CD4-positive, alpha-beta memory T cell (primary cell): ENCODE measurements at regions of chr17 and their contacts with region 1.

Region 1: GRCh38 chr17:5592382-5592781 is 8.1 kb upstream of the NLRP1 start:
- DNase-seq: peak in 4 of 5 donors; percentile 38 to 47 (median 42)
- H3K4me3 ChIP-seq: no peak overlapping the region
- H3K4me3 Mint-ChIP-seq: no peak overlapping the region
- H3K27ac ChIP-seq: no peak overlapping the region
- H3K27ac Mint-ChIP-seq: no peak overlapping the region
- H3K4me1 ChIP-seq: peaks cover 1% of the 10 kb centered on the region
- H3K4me1 Mint-ChIP-seq: peaks cover under 1 to 8% (median 2%) of the 10 kb centered on the region in 4 donors
- H3K27me3 ChIP-seq: no peaks in the 10 kb centered on the region
- H3K27me3 Mint-ChIP-seq: peaks cover 14 to 21% of the 10 kb centered on the region in 2 donors

Region 2: DNA sequence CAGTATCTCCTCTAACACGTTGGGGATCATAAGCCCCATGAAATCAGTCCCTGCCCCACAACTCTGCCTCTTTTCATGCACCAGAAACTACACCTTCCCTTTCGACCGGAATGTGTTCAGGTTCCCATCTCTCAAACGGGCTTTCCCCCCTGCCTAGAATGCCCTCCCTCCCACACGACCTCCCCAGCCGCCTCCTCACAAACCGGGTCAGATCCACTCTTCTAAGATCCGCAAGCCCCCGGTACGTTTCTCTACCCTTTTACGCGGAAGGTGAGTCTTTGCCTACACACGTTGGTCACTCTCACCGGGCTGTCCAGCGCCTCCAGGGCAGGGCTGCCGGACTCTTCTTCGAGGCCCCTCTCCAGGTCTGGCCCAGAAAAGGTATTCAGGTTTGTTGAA is 124.3 kb before region 1 on chr17:
- CTCF ChIA-PET with region 1: no interaction called
- POLR2A ChIA-PET with region 1: no interaction called
- intact Hi-C with region 1: no loop called
- DNase-seq: peak in 2 of 5 donors; percentile 7 to 20
- H3K4me3 ChIP-seq: peak overlapping the region; percentile 33 to 68
- H3K4me3 Mint-ChIP-seq: peak overlapping the region; percentile 80 to 95 (median 88)
- H3K27ac ChIP-seq: peak overlapping the region; percentile 60
- H3K27ac Mint-ChIP-seq: peak overlapping the region; percentile 33 to 94 (median 83)
- H3K4me1 ChIP-seq: peaks cover 18% of the 10 kb centered on the region
- H3K4me1 Mint-ChIP-seq: peaks cover 32 to 50% (median 43%) of the 10 kb centered on the region in 4 donors
- H3K27me3 ChIP-seq: no peaks in the 10 kb centered on the region
- H3K27me3 Mint-ChIP-seq: no peaks in the 10 kb centered on the region

Region 3: DNA sequence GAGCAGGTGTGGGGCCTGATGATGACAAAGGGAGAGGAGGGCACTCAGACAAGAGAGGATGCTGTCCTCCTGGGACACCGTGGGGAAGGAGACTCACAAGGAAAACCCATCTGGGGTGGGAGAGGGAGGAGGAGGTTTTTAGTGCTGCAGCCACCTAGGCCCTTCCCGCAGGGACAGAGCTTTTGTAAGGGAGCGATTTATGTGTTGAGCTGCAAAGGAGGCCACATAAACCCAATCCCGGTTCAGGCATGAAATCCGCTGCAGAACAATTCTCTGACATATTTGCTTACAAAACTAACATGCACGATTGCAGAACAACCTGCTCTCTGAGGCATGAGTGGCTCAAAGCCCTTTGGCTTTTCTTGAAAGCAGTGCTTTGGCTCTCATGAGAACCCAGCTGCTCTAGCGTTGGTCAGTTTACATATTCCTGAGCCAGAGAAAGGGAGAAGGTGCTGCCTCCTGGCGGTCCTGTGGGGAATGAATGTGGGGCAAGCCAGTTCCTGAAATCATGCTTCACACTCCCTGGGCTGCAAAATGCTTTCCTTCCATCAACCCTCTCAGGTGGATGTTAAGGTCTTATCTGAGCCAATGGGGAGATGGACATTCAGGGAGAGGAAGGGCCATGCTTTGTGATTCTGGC is 114.3 kb after region 1 on chr17:
- CTCF ChIA-PET with region 1: interaction called, 36 read pairs
- POLR2A ChIA-PET with region 1: no interaction called
- intact Hi-C with region 1: loop called (anchors 1 kb)
- DNase-seq: peak in 4 of 5 donors; percentile 29 to 45 (median 40)
- H3K4me3 ChIP-seq: no peak overlapping the region
- H3K4me3 Mint-ChIP-seq: no peak overlapping the region
- H3K27ac ChIP-seq: no peak overlapping the region
- H3K27ac Mint-ChIP-seq: no peak overlapping the region
- H3K4me1 ChIP-seq: no peaks in the 10 kb centered on the region
- H3K4me1 Mint-ChIP-seq: no peaks in the 10 kb centered on the region
- H3K27me3 ChIP-seq: no peaks in the 10 kb centered on the region
- H3K27me3 Mint-ChIP-seq: peaks cover 14 to 28% of the 10 kb centered on the region in 2 donors

Region 4: GRCh38 chr17:6421700-6422604 is 829.6 kb after region 1 on chr17:
- CTCF ChIA-PET with region 1: interaction called, 28 read pairs
- POLR2A ChIA-PET with region 1: interaction called, 11 read pairs
- intact Hi-C with region 1: loop called (anchors 1 kb)
- DNase-seq: peak; percentile 53 to 62 (median 57)
- H3K4me3 ChIP-seq: no peak overlapping the region
- H3K4me3 Mint-ChIP-seq: no peak overlapping the region
- H3K27ac ChIP-seq: no peak overlapping the region
- H3K27ac Mint-ChIP-seq: peak overlapping the region in 1 of 7 donors; percentile 42
- H3K4me1 ChIP-seq: peaks cover 7% of the 10 kb centered on the region
- H3K4me1 Mint-ChIP-seq: peaks cover 2 to 11% (median 7%) of the 10 kb centered on the region in 4 donors
- H3K27me3 ChIP-seq: peaks cover 4% of the 10 kb centered on the region
- H3K27me3 Mint-ChIP-seq: peaks cover 2 to 14% of the 10 kb centered on the region in 2 donors

Region 5: GRCh38 chr17:6427279-6427781 is 834.9 kb after region 1 on chr17:
- CTCF ChIA-PET with region 1: interaction called, 28 read pairs
- POLR2A ChIA-PET with region 1: interaction called, 11 read pairs
- intact Hi-C with region 1: loop called (anchors 1 kb)
- DNase-seq: peak; percentile 55 to 74 (median 64)
- H3K4me3 ChIP-seq: no peak overlapping the region
- H3K4me3 Mint-ChIP-seq: peak overlapping the region in 7 of 8 donors; percentile 40 to 79 (median 63)
- H3K27ac ChIP-seq: no peak overlapping the region
- H3K27ac Mint-ChIP-seq: peak overlapping the region; percentile 32 to 80 (median 54)
- H3K4me1 ChIP-seq: peaks cover 21% of the 10 kb centered on the region
- H3K4me1 Mint-ChIP-seq: peaks cover 10 to 22% (median 13%) of the 10 kb centered on the region in 4 donors
- H3K27me3 ChIP-seq: no peaks in the 10 kb centered on the region
- H3K27me3 Mint-ChIP-seq: peaks cover 0 to 5% of the 10 kb centered on the region in 2 donors

Region 6: DNA sequence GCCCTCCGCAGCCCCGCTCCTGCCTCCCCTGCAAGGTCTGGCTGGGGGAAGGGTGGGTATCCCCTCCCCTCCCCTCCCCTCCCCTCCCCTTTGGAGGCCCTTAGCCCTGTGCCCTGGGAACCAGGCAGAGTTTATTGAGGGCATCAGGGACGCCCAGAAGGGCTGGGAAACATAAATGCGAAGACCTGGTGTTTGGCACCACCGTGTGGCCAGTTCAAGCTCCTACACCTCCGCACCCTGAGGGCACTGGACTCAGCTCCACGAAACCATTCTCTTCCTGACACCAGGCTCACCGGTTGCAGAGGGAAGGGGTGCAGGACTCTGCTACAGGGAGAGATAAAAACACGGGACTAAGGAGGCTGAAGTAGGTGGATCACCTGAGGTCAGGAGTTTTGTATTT is 843.6 kb after region 1 on chr17:
- CTCF ChIA-PET with region 1: interaction called, 59 read pairs
- POLR2A ChIA-PET with region 1: no interaction called
- intact Hi-C with region 1: loop called (anchors 1 kb)
- DNase-seq: peak; percentile 52 to 67 (median 58)
- H3K4me3 ChIP-seq: no peak overlapping the region
- H3K4me3 Mint-ChIP-seq: no peak overlapping the region
- H3K27ac ChIP-seq: no peak overlapping the region
- H3K27ac Mint-ChIP-seq: no peak overlapping the region
- H3K4me1 ChIP-seq: no peaks in the 10 kb centered on the region
- H3K4me1 Mint-ChIP-seq: peaks cover 0 to 4% (median 0%) of the 10 kb centered on the region in 4 donors
- H3K27me3 ChIP-seq: peaks cover 4% of the 10 kb centered on the region
- H3K27me3 Mint-ChIP-seq: peaks cover 16 to 18% of the 10 kb centered on the region in 2 donors

Region 7: DNA sequence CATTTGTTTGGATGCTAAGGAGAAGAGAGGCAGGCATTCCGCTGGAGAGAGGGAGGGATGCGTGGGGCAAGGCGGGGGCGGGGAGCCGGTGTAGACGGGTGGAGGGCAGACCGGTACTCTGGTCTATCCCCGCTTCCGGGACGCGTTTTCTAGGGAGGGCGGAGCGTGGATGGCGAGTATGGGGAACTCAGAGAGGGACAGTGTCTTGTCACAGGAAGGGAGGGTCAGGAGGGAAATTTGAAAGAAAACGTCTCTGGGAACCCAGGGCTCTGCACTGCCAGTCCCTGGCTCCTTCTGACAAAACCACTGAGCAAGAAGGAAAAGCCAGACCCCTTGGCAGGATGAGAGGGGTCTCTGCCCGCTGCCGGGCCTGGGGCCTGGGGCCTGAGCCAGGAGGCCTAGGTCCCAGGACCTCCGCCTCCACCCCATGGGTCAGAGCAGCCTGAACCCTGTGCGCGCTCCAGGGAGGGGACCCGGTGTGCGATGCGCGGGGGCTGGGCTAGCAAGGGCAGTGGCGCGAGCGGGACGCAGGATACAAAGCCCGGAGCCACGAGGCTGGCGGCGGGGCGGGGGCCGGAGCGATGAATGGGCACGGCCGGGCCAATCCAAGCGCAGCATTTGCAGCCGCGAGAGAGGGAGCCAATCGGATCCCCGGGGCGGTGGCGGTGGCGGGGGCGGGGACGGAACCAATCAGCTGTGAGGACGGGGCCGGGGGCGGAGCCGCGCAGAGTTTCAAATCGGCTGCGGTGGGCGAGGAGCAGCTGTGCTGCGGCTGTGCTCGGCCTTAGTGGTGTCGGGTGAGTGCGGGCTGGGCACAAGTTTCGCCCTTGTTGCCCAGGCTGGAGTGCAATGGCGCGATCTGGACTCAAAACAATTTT is 851.5 kb after region 1 on chr17 and contains the start of gene PIMREG:
- CTCF ChIA-PET with region 1: interaction called, 10 read pairs
- POLR2A ChIA-PET with region 1: no interaction called
- intact Hi-C with region 1: no loop called
- DNase-seq: peak; percentile 82 to 91 (median 83)
- H3K4me3 ChIP-seq: peak within 1 kb of the TSS; percentile 69 to 93
- H3K4me3 Mint-ChIP-seq: peak within 1 kb of the TSS; percentile 91 to 94 (median 92)
- H3K27ac ChIP-seq: peak within 1 kb of the TSS; percentile 17
- H3K27ac Mint-ChIP-seq: peak within 1 kb of the TSS; percentile 68 to 96 (median 87)
- H3K4me1 ChIP-seq: peaks cover 5% of the 10 kb centered on the region
- H3K4me1 Mint-ChIP-seq: peaks cover 9 to 16% (median 12%) of the 10 kb centered on the region in 4 donors
- H3K27me3 ChIP-seq: no peaks in the 10 kb centered on the region
- H3K27me3 Mint-ChIP-seq: peaks cover 6 to 8% of the 10 kb centered on the region in 2 donors
- total RNA-seq, gene PIMREG: not detected